ENCODE measurements at regions of chr5 and their contacts with region 1.

Region 1: DNA sequence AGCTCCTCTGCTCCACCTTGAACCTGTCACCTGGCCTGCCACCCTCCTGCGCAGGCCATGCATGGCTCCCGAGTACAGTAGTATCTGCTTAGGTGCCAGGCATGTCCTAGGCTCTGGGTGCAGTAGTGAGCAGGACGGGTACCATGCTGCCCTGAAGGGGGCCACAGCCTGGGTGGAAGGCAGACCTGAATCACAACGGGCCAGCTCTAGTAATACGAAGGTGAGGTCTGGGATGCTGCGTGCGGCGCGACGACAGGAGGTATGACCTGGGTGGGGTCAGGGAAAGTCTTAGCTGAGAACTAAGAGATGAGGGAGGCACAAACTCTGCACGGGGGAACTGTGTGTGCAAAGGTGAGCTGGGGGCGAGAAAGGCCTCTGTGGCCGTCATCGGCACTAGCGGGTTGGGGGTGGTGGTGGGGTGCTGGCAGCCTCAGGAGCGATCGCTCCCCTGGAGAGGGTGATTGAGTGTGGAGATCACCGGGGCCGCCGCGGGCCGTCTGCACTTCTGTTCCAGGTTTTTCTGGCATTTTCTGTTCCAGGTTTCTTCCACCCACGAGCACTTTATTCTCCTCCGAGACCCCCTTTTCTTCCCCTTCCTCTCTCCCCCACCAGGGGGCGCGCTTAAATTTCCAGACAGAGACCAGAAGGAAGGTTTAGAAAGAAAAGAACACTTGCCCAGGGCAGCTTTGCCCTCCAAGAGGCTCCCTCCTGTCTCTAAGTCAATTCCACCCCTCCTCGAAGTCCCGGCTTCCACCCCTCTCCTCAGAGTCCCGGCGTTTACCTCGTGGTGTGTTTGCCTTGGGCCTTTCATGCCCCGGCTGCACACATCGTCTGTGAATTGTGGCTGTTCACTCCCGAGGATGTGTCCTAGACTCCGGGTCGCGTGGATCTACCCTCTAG is 15.1 kb downstream of the PDLIM4 start:
- DNase-seq: peak; percentile 73
- H3K4me3 ChIP-seq: peak overlapping the region in 1 of 4 donors; percentile 39
- H3K27ac ChIP-seq: peak overlapping the region; percentile 22 to 60 (median 52)
- H3K4me1 ChIP-seq: peaks cover 5 to 44% (median 20%) of the 10 kb centered on the region in 4 donors
- H3K27me3 ChIP-seq: no peaks in the 10 kb centered on the region
- CTCF ChIP-seq: peak; percentile 88 to 94 (median 91)
- EP300 ChIP-seq: no peak
- POLR2A ChIP-seq: no peak

Region 2: DNA sequence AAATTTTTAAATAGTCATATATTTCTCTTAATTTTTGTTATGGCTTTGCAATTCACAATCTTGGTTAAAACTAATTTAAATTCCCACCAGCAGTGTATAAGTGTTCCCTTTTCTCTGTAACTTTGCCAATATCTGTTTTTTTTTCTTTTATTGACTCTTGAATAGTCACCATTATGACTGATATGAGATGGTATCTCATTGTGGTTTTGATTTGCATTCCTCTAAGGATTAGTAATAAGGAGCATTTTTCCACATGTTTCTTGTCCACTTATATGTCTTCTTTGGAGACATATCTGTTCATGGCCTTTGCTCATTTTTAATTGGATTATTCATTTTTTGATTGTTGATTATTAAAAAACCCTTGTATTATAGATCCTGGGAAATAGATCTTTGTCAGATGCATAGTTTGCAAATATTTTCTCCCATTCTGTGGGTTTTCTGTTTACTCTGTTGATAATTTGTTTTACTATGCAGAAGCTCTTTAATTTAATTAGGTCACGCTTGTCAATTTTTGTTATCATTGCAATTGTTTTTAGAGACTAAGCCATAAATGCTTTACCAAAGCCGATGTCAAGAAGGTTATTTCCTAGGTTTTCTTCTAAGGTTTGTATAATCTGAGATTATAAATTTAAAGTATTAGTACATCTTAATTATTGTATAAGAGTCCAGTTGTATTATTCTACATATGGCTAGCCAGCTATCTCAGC is 1757.4 kb before region 1 on chr5:
- in situ Hi-C with region 1: no loop called
- intact Hi-C with region 1: no loop called
- DNase-seq: no peak
- H3K4me3 ChIP-seq: no peak overlapping the region
- H3K27ac ChIP-seq: no peak overlapping the region
- H3K4me1 ChIP-seq: no peaks in the 10 kb centered on the region
- H3K27me3 ChIP-seq: no peaks in the 10 kb centered on the region
- CTCF ChIP-seq: no peak
- EP300 ChIP-seq: no peak
- POLR2A ChIP-seq: no peak

Region 3: GRCh38 chr5:131974956-131975726 is 297.4 kb before region 1 on chr5:
- in situ Hi-C with region 1: no loop called
- intact Hi-C with region 1: no loop called
- DNase-seq: no peak
- H3K4me3 ChIP-seq: no peak overlapping the region
- H3K27ac ChIP-seq: no peak overlapping the region
- H3K4me1 ChIP-seq: peaks cover 0 to 11% (median 0%) of the 10 kb centered on the region in 4 donors
- H3K27me3 ChIP-seq: no peaks in the 10 kb centered on the region
- CTCF ChIP-seq: no peak
- EP300 ChIP-seq: no peak
- POLR2A ChIP-seq: no peak

Region 4: DNA sequence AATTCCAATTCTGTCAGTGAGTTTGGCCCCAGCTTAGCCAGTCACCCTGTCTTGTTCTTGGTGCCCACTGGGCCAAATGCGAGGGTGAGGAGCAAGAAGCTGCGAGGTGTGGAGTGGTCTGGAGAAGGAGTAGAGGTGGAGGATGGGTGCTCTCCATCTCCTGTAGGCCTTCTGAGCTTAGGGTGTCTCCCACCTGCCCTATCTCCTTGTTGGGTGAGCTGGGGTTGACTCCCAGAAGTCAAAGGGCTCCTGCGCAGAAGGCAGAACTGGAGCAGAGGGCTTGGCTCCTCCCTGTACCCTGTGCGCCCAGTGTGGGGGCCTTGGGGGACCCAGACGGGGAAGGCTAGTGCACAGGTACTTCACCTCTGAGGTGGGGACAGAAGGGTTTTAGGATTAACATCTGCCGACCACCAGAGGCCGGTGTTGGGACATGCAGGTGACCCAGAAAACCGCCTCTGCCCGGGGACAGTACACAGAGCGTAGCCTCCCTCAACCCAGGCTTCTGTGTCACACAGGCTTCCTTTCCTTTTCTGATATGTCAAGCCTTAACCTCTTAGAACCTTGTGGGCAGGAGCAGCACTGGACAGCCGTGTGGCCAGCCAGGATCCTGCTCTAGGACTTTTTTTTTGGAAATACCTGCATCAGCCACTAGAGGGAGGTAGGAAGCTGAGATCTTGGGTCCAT is 253.9 kb after region 1 on chr5:
- in situ Hi-C with region 1: loop called in 1 of 4 experiments (anchors 25 kb)
- intact Hi-C with region 1: no loop called
- DNase-seq: peak; percentile 17
- H3K4me3 ChIP-seq: no peak overlapping the region
- H3K27ac ChIP-seq: no peak overlapping the region
- H3K4me1 ChIP-seq: peaks cover 0 to 7% (median 0%) of the 10 kb centered on the region in 4 donors
- H3K27me3 ChIP-seq: no peaks in the 10 kb centered on the region
- CTCF ChIP-seq: peak; percentile 83 to 91 (median 88)
- EP300 ChIP-seq: no peak
- POLR2A ChIP-seq: no peak